ENCODE measurements at regions of chr11 and their contacts with region 1.

Region 1: DNA sequence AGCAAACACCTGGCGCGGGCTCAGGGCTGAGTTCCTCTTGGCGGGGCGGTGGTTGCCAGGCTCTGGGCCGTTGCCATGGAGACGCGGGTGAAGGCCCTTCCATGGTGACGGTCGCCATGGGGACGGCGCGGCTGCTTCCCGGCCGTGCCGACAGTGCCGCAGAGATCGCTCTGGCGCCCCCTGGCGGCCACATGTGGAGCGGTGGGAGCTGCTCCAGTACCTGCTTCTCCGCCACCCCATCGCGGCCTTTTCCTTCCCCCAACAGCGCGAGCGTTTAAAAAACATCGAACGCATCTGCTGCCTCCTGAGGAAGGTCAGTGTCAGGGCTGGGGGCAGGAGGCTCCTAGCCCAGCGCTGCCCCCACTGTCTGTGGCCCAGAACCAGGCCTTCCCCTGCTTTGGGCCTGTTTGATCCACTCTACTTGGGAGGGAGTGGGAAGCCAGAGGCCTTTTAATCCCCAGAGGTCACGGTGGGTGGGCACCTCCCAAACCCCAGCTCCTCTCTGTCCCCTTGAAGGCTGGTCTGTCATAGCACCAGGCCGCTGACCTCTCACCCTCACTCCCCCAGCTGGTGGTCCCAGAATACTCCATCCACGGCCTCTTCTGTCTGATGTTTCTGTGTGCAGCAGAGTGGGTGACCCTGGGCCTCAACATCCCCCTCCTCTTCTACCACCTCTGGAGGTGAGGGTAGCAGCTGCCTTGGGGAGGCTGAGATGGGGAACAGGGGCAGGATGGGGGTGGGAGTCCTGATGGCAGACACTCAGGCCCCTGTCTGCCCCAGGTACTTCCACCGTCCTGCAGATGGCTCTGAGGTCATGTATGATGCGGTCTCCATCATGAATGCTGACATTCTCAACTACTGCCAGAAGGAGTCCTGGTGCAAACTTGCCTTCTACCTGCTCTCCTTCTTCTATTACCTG is 4.8 kb downstream of the CNIH2 start:
- DNase-seq: peak; percentile 89 to 96
- ATAC-seq: peak; percentile 58 to 89
- H3K4me3 ChIP-seq: no peak overlapping the region
- H3K27ac ChIP-seq: peak overlapping the region in 1 of 2 experiments; percentile 55; a peak in 2 of 6 replicates
- H3K4me1 ChIP-seq: peaks cover 32% of the 10 kb centered on the region
- CTCF ChIP-seq: peak; percentile 90
- EP300 ChIP-seq: no peak
- POLR2A ChIP-seq: no peak
- RAD21 ChIP-seq: peak; percentile 51 to 53

Region 2: DNA sequence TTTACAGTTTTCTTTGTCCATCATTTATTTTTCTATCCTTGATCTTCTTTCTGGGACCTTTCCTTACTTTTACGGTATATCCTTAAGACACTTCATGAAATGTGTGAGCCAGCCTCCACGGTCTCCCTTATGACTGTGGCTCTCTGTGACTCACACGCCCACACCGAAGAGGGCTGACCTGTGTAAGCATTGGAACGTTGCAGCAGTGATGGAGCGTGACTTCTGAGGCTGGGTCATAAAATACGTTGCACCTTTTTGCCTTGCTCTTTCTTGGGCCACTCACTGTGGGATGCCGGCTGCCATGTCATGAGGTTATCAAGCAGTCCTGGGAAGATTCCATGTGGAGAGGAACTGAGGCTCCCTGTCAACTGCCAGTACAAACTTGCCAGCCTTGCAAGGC is 110.6 kb before region 1 on chr11:
- CTCF ChIA-PET with region 1: no interaction called
- POLR2A ChIA-PET with region 1: no interaction called
- DNase-seq: peak in 1 of 2 experiments; percentile 29
- ATAC-seq: peak; percentile 71 to 72; a peak in 5 of 6 replicates
- H3K4me3 ChIP-seq: no peak overlapping the region
- H3K27ac ChIP-seq: peak overlapping the region in 1 of 2 experiments; percentile 1; a peak in 1 of 6 replicates
- H3K4me1 ChIP-seq: peaks cover 33% of the 10 kb centered on the region
- CTCF ChIP-seq: no peak
- EP300 ChIP-seq: no peak
- POLR2A ChIP-seq: no peak
- RAD21 ChIP-seq: no peak

Region 3: GRCh38 chr11:66302656-66303055 is 19.9 kb after region 1 on chr11:
- CTCF ChIA-PET with region 1: interaction called, 27 read pairs
- POLR2A ChIA-PET with region 1: no interaction called
- DNase-seq: no peak
- ATAC-seq: no peak
- H3K4me3 ChIP-seq: no peak overlapping the region
- H3K27ac ChIP-seq: no peak overlapping the region
- H3K4me1 ChIP-seq: no peaks in the 10 kb centered on the region
- CTCF ChIP-seq: no peak
- EP300 ChIP-seq: no peak
- POLR2A ChIP-seq: no peak
- RAD21 ChIP-seq: no peak